ENCODE measurements at regions of chr19 and their contacts with region 1.

Region 1: DNA sequence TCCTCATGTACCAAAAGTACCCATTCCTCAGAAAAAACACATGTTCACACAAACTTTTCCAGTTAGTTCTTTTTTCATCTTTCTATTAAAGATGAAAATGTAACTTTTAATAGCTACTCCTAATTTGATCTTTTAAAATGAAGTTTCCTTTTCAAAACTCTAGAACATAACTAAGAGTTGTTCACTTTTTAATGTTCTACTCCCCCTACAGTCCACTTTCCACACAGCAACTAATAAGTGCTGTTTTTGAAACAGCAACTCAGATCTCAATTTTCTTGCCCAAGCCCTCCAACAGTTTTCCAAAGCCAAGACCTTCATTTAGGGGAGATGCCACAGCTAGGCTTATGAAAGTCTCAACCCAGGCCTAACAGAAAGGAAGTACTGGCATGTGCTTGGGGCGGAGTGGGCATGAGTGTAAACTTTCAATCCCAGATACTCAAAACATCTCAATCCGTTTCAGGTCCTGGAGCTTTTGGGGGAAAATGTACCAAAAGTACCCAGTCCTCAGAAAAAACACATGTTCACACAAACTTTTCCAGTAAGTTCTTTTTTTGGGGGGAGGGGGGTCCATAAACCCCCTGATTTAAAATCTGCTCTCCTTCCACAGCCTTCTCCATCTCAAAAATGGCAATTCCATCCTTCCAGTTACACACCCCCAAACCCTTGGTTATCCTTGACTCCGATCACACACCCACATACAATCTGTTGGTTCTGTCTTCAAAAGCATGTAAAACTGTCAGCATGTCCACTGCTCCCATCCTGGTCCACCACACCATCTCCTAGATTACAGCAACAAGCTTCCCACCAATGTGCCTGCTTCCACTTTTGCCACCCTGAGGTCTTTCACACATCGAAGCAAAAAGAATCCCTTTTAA is 2.0 kb downstream of the FBL start:
- DNase-seq: peak; percentile 71
- H3K4me3 ChIP-seq: peak overlapping the region; percentile 93
- H3K27ac ChIP-seq: no peak overlapping the region
- H3K4me1 ChIP-seq: peaks cover 34% of the 10 kb centered on the region
- H3K27me3 ChIP-seq: no peaks in the 10 kb centered on the region
- CTCF ChIP-seq: peak; percentile 78

Region 2: GRCh38 chr19:40348125-40348913 is 504.2 kb after region 1 on chr19 and contains the starts of genes C19orf47 and PLD3:
- CTCF ChIA-PET with region 1: interaction called, 15 read pairs
- POLR2A ChIA-PET with region 1: no interaction called
- intact Hi-C with region 1: no loop called
- DNase-seq: peak; percentile 100
- H3K4me3 ChIP-seq: peak within 1 kb of the TSS; percentile 86
- H3K27ac ChIP-seq: peak within 1 kb of the TSS; percentile 66
- H3K4me1 ChIP-seq: peaks cover 10% of the 10 kb centered on the region
- H3K27me3 ChIP-seq: no peaks in the 10 kb centered on the region
- CTCF ChIP-seq: no peak
- total RNA-seq, gene C19orf47: 26.5 and 30.8 TPM in 2 replicates
- total RNA-seq, gene PLD3: 310 and 334 TPM in 2 replicates